Activated naive CD4-positive, alpha-beta T cell treated with anti-CD3 and anti-CD28 coated beads, Interleukin-2, amount 10 ng/mL, durations not matched to agents 7 days and 5 days (primary cell): ENCODE measurements at regions of chr3 and their contacts with region 1.

Region 1: DNA sequence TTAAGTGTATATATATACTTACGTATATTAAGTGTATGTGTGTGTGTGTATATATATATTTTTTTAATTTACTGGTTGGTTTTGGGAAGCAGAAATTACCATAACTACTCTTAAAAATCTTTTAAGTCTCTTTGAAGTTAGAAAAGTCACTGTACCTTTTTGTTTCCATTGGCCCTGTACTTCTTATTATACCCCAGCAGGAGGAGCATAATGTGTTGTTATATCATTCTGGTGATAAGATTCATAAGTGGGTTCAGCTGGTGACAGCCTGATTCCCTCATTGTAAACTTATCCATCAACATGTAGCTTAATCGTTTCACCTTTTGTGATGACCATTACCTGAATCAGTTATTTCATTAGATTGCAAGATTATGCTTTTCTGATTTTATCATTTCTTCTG is 30.8 kb downstream of the MLH1 start:
- DNase-seq: no peak
- H3K4me3 Mint-ChIP-seq: no peak overlapping the region
- H3K27ac Mint-ChIP-seq: no peak overlapping the region
- H3K4me1 Mint-ChIP-seq: peaks cover 6% of the 10 kb centered on the region
- H3K27me3 Mint-ChIP-seq: no peaks in the 10 kb centered on the region

Region 2: GRCh38 chr3:36814776-36815175 is 209.3 kb before region 1 on chr3:
- CTCF ChIA-PET with region 1: no interaction called
- DNase-seq: no peak
- H3K4me3 Mint-ChIP-seq: no peak overlapping the region
- H3K27ac Mint-ChIP-seq: no peak overlapping the region
- H3K4me1 Mint-ChIP-seq: no peaks in the 10 kb centered on the region
- H3K27me3 Mint-ChIP-seq: peaks cover 8% of the 10 kb centered on the region

Region 3: DNA sequence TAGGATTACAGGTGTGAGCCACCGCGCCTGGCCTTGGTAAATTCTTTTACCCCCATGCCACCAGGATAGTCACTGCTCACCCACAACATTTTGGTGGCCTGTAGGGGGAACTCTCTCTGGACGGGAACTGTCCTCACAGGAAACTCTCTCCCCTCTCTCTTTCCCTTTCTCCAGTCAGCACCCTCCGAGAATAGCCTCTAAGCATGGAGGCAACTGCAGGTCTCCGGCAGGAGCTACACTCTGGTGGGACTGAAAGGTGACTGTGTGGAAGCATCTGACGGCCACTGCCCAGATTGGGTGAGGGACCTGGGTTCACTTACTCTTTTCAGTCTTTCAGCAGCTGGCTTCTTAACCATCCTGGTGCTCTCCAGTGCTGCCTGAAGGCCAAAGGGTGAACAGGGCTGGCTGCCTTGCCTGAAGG is 100.6 kb before region 1 on chr3:
- CTCF ChIA-PET with region 1: no interaction called
- DNase-seq: no peak
- H3K4me3 Mint-ChIP-seq: no peak overlapping the region
- H3K27ac Mint-ChIP-seq: no peak overlapping the region
- H3K4me1 Mint-ChIP-seq: peaks cover 8% of the 10 kb centered on the region
- H3K27me3 Mint-ChIP-seq: no peaks in the 10 kb centered on the region

Region 4: DNA sequence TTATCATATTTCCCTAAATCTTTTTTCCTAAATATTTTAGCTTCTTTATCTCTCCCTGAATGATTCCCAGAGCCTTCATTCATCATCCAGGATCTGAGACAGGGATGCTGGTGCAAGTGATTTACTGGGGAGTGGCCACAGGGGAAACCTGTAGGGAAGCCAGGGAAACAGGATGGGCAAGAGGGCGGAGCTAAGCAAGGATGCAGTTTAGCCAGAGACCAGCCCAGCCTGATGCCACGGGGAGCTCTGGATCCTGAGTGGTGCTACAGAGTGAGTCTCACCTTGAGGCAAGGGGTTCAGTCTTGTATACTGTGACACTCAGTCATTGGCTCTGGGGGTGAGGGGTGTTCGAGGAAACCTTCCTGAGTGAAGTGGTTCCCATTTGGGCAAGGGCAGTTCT is 190.0 kb after region 1 on chr3:
- CTCF ChIA-PET with region 1: interaction called, 28 read pairs
- DNase-seq: no peak
- H3K4me3 Mint-ChIP-seq: no peak overlapping the region
- H3K27ac Mint-ChIP-seq: no peak overlapping the region
- H3K4me1 Mint-ChIP-seq: peaks cover 6% of the 10 kb centered on the region
- H3K27me3 Mint-ChIP-seq: no peaks in the 10 kb centered on the region